HCT116 (cell line): ENCODE measurements at regions of chr7 and their contacts with region 1.

Region 1: GRCh38 chr7:73635428-73636200 is 11.3 kb upstream of the MLXIPL start:
- DNase-seq: no peak
- ATAC-seq: peak; percentile 42
- H3K4me3 ChIP-seq: no peak overlapping the region
- H3K27ac ChIP-seq: peak overlapping the region; percentile 94
- H3K4me1 ChIP-seq: peaks cover 44 to 70% of the 10 kb centered on the region in 2 experiments
- H3K27me3 ChIP-seq: no peaks in the 10 kb centered on the region
- CTCF ChIP-seq: no peak
- POLR2A ChIP-seq: no peak
- RAD21 ChIP-seq: no peak

Region 2: DNA sequence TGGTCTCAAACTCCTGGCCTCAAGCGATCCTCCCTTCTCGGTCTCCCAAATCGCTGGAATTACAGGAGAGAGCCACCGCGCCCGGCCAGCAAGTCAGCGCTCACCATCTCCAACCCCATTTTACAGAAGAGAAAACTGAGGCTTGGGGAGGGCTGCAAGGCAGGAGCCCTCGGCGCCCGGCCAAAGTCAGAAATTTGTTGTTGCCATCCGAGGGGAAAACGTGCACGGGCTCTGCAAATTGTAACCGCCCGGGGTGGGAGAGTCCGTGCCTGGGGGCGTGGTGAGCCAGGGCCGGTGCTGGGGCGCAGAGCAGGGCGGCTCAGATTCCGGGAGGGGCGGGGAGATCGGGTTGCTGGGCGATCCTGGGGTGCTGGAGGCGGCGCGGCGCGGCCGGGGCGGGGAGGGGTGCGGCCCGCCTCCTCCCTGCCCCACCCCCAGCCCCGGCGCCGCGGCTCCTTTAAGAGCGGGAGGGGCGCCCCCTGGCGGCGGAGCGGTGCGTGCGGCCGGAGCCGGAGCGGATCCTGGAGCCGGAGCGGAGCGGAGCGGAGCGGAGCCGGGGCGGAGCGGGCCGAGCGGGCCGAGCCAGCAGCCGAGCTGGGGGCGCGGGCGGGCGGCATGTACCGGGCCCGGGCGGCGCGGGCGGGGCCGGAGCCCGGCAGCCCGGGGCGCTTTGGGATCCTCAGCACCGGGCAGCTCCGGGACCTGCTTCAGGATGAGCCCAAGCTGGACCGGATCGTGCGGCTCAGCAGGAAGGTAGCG is 31.9 kb after region 1 on chr7 and contains the start of gene VPS37D:
- CTCF ChIA-PET with region 1: interaction called, 4 read pairs
- POLR2A ChIA-PET with region 1: interaction called, 11 read pairs
- RAD21 ChIA-PET with region 1: no interaction called
- intact Hi-C with region 1: no loop called
- DNase-seq: peak; percentile 67
- ATAC-seq: peak; percentile 85
- H3K4me3 ChIP-seq: peak within 1 kb of the TSS; percentile 68 to 69
- H3K27ac ChIP-seq: peak within 1 kb of the TSS; percentile 66; the same call in 1 of the 2 replicates
- H3K4me1 ChIP-seq: peaks cover 33 to 46% of the 10 kb centered on the region in 2 experiments
- H3K27me3 ChIP-seq: no peaks in the 10 kb centered on the region
- CTCF ChIP-seq: peak; percentile 57 to 68 (median 61); a peak in 5 of 6 replicates
- POLR2A ChIP-seq: no peak
- RAD21 ChIP-seq: peak; percentile 72
- total RNA-seq, gene VPS37D: 9.5 TPM